ENCODE measurements at regions of chr2 and their contacts with region 1.

Region 1: DNA sequence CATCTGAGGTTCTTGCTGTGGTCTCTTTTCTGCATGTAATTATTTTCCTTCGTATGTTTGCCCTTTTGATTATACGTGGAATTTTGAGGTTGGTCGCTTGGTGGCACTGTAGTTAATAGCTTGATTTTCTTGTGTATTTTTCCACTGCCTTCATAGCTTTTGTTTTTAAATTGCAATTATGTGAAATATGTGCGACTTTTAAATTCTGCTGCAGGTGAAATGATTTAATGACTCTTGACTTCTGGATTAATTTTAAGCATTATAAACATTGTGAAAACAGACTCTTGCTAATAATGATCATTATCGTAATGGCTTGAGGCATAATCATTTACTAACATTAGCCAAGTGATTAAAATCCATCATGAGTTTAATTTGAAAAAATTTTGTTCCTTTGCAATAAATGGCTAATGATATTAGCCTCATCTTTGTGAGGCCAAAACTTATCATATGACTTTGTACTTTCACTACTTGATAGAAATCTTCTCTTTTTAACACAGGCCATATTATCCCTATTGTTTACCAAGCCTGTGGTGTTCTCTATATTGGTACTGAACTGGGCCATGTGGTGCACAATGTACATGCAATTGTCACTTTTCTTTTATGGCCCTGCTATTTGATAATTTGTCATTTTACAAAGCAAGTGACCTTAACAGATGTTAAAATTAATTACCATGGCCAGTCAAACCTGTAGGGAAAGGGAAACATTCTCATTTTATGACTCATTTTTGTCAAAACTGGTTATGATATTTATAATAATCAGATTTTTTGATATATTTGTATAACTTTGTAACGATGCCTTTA is 62.8 kb upstream of the NEUROD1 start:
- DNase-seq: peak; percentile 68
- ATAC-seq: peak; percentile 57
- H3K4me3 ChIP-seq: peak overlapping the region in 1 of 2 experiments; percentile 7; a peak in 1 of 4 replicates
- H3K27ac ChIP-seq: peak overlapping the region; percentile 93
- H3K4me1 ChIP-seq: peaks cover 31 to 63% of the 10 kb centered on the region in 2 experiments
- H3K27me3 ChIP-seq: no peaks in the 10 kb centered on the region
- CTCF ChIP-seq: peak; percentile 47 to 85 (median 60)
- POLR2A ChIP-seq: no peak
- RAD21 ChIP-seq: peak; percentile 93

Region 2: DNA sequence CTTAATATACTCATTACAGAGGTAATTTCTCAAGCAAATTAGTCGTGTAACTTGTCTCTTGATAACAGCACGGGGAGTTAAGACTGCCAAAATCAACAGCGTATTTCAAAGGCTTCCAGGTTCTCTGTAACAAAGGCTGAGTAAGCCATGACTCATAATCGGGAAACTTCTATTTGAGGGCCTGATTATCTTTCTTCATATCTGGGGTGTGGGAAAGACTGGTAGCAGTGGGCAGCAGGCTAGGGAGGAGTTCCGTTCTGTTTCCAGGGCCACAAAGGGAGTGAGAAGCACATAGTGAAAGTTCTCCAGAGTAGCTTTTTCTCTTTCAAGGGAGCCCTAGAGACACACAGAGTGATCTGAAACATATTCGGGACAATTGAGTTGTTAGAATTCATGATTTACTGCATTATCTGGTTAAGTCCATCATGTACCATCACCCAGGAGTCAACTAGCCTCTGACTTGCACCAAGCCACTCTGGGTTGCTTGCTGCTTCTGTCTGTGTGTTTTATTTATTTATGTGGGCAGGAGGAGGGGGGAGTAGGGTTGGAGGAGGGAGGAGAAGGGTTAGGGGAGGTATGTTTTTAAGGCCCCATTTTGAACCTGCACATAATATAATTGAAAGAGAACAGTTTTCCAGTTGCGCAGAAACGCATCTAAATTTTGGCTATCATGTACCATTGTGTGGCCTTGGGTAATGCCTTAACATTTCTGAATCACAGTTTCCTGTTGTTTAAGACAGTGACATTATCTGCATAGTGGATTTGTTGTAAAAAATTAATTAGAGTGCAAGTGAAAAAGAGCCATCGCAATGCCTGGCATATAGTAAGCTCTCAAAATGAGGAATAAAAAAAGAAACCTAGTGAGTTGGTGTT is 67.9 kb after region 1 on chr2:
- CTCF ChIA-PET with region 1: interaction called, 3 read pairs
- POLR2A ChIA-PET with region 1: interaction called, 3 read pairs
- RAD21 ChIA-PET with region 1: no interaction called
- intact Hi-C with region 1: loop called (anchors 5 kb)
- DNase-seq: peak; percentile 98
- ATAC-seq: peak; percentile 81
- H3K4me3 ChIP-seq: peak overlapping the region in 1 of 2 experiments; percentile 6; a peak in 1 of 4 replicates
- H3K27ac ChIP-seq: peak overlapping the region; percentile 98
- H3K4me1 ChIP-seq: peaks cover 88 to 96% of the 10 kb centered on the region in 2 experiments
- H3K27me3 ChIP-seq: no peaks in the 10 kb centered on the region
- CTCF ChIP-seq: no peak
- POLR2A ChIP-seq: peak; percentile 61
- RAD21 ChIP-seq: peak; percentile 53

Region 3: GRCh38 chr2:181904022-181904632 is 161.0 kb after region 1 on chr2:
- CTCF ChIA-PET with region 1: interaction called, 34 read pairs
- POLR2A ChIA-PET with region 1: interaction called, 6 read pairs
- RAD21 ChIA-PET with region 1: interaction called in 1 of 2 experiments, 4 read pairs
- intact Hi-C with region 1: loop called (anchors 1 kb)
- DNase-seq: no peak
- ATAC-seq: no peak
- H3K4me3 ChIP-seq: no peak overlapping the region
- H3K27ac ChIP-seq: peak overlapping the region; percentile 99
- H3K4me1 ChIP-seq: peaks cover 71 to 98% of the 10 kb centered on the region in 2 experiments
- H3K27me3 ChIP-seq: no peaks in the 10 kb centered on the region
- CTCF ChIP-seq: peak; percentile 24 to 59 (median 30); a peak in 3 of 6 replicates
- POLR2A ChIP-seq: no peak
- RAD21 ChIP-seq: peak; percentile 48